Activated naive CD4-positive, alpha-beta T cell treated with anti-CD3 and anti-CD28 coated beads for 36 hours (primary cell): ENCODE measurements at regions of chr1 and their contacts with region 1.

Region 1: DNA sequence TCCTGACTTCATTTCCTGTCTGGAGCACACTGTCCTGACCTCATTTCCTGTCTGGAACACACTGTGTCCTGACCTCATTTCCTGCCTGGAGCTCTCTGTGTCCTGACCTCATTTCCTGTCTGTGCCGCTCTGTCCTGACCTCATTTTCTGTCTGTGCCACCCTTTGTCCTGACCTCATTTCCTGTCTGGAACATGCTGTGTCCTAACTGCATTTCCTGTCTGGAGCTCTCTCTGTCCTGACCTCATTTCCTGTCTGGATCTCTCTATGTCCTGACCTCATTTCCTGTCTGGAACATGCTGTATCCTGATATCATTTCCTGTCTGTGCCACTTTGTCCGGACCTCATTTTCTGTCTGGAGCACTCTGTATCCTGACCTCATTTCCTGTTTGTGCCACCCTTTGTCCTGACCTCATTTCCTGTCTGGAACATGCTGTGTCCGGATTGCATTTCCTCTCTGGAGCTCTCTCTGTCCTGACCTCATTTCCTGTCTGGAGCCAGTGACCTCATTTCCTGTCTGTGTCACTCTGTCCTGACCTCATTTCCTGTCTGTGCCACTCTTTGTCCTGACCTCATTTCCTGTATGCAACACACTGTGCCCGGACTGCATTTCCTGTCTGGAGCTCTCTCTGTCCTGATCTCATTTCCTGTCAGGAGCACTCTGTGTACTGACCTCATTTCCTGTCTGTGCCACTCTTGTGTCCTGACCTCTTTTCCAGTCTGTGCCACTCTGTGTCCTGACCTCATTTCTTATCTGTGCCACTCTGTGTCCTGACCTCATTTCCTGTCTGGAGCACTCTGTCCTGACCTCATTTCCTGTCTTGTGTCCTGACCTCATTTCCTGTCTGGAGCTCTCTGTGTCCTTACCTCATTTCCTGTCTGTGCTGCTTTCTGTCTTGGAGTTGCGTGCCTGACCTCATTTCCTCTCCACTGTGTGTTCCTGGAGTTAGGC is 27.6 kb downstream of the SKI start:
- DNase-seq: peak; percentile 94
- H3K4me3 Mint-ChIP-seq: no peak overlapping the region
- H3K27ac Mint-ChIP-seq: no peak overlapping the region
- H3K4me1 Mint-ChIP-seq: peaks cover 66% of the 10 kb centered on the region
- H3K27me3 Mint-ChIP-seq: no peaks in the 10 kb centered on the region

Region 2: GRCh38 chr1:2290595-2291510 is 35.2 kb after region 1 on chr1:
- CTCF ChIA-PET with region 1: no interaction called
- intact Hi-C with region 1: loop called (anchors 1 kb)
- DNase-seq: peak; percentile 96
- H3K4me3 Mint-ChIP-seq: peak overlapping the region; percentile 72
- H3K27ac Mint-ChIP-seq: peak overlapping the region; percentile 99
- H3K4me1 Mint-ChIP-seq: peaks cover 84% of the 10 kb centered on the region
- H3K27me3 Mint-ChIP-seq: no peaks in the 10 kb centered on the region

Region 3: DNA sequence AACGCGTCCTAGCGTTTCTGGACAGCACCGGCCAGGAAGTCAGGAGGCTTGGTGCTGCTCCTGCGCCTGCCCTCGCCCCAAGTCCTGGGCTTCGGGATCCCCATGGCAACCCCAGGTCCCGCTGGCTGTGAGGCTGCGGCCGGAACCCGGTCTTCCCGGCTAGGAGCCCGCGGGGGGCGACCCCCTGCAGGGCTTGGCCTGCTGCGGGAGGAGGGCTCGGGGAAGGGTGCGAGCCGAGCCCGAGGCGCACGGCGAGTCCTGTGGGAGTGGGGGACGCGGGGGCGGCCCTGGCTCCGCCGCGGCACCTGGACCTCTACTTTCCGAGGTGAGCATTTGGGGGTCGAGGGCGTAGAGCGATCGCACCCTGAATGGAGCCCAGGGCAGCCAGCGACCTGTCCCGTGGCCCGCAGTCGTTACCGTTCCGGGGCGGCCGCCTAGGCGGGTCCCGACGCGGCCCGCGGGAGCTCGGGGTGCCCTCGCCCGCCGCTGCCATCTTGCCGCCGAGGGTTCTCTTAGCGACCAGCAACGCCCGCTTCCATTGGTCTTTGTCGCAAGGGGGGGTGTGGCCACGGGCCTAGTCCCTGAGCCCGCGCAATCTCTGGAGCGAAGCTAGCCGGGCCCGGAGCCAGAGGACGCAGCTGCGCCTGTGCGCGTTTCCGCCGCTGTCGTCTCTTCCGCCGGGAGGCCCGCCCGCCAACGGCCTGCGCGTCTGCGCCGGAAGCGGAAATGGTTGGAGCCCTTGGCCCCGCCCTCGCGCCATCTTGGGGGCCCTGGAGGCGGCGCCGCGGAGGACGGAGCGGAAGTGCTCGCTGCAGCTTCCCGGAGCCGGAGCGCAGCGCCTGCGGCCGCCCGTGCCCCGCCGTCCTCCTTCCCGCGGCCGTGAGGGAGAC is 135.6 kb after region 1 on chr1 and contains the starts of genes MORN1 and RER1:
- CTCF ChIA-PET with region 1: no interaction called
- intact Hi-C with region 1: loop called (anchors 1 kb)
- DNase-seq: peak; percentile 99
- H3K4me3 Mint-ChIP-seq: peak within 1 kb of the TSS; percentile 88
- H3K27ac Mint-ChIP-seq: peak within 1 kb of the TSS; percentile 79
- H3K4me1 Mint-ChIP-seq: peaks cover 40% of the 10 kb centered on the region
- H3K27me3 Mint-ChIP-seq: no peaks in the 10 kb centered on the region
- total RNA-seq, gene MORN1: 3.2 to 4.9 TPM
- total RNA-seq, gene RER1: 115 to 124 TPM